Activated T-helper 1 cell treated with anti-CD3 and anti-CD28 coated beads, Interleukin-12 subunit alpha, Interleukin-12 subunit beta, Interleukin-2, Interleukin-4 antibody, amounts not matched to agents 30 ng/mL and 10 ng/mL and 1 ng/mL, durations not matched to agents 14 hours and 24 hours and 36 hours (primary cell): ENCODE measurements at regions of chr19 and their contacts with region 1.

Region 1: DNA sequence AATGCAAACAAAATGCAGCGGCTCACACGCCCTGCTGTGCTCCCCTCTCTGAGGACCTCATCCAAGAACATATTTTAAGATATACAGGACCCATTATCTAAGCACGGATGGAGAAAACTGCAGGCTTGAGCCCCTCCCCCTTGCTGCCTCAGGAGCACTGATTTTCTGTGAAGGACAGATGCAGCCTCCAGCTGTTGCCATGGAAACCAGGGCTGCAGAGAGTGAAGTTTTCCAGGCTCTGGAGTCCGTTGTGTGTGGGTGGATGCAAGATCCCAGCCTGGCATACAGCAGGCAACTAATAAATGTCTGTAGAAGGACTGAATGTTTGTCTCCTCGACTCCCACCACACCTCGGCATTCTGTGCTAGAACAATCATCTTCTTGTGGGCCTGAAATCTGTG is 105.6 kb upstream of the PEG3 start:
- DNase-seq: no peak
- H3K4me3 Mint-ChIP-seq: no peak overlapping the region
- H3K27ac Mint-ChIP-seq: no peak overlapping the region
- H3K4me1 Mint-ChIP-seq: no peaks in the 10 kb centered on the region
- H3K27me3 Mint-ChIP-seq: no peaks in the 10 kb centered on the region

Region 2: DNA sequence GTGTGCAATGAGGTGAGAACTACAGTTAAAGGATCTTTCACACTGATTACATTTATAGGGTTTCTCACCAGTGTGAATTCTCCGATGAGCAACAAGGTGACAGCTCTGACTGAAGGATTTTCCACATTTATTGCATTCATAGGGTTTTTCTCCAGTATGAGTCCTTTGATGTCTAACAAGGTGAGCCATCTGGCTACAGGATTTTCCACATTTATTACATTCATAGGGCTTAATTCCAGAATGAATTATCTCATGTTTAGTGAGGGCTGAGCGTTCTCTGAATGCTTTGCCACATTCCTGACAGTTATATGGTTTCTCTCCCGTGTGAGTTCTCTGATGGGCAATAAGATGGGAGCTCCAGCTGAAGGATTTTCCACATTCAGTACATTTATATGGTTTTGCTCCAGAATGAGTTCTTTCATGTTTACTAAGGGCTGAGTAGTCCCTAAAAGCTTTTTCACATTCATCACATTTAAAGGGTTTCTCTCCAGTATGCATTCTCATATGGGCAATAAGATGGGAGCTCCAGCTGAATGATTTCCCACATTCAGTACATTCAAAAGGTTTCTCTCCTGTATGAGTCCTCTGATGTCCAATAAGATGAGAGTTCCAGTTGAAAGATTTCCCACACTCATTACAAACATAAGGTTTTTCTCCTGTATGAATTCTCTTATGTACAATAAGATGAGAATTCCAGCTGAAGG is 1032.6 kb after region 1 on chr19:
- intact Hi-C with region 1: loop called (anchors 5 kb)
- DNase-seq: no peak
- H3K4me3 Mint-ChIP-seq: no peak overlapping the region
- H3K27ac Mint-ChIP-seq: no peak overlapping the region
- H3K4me1 Mint-ChIP-seq: no peaks in the 10 kb centered on the region
- H3K27me3 Mint-ChIP-seq: peaks cover 3% of the 10 kb centered on the region